CD4-positive, alpha-beta memory T cell (primary cell): ENCODE measurements at regions of chr2 and their contacts with region 1.

Region 1: DNA sequence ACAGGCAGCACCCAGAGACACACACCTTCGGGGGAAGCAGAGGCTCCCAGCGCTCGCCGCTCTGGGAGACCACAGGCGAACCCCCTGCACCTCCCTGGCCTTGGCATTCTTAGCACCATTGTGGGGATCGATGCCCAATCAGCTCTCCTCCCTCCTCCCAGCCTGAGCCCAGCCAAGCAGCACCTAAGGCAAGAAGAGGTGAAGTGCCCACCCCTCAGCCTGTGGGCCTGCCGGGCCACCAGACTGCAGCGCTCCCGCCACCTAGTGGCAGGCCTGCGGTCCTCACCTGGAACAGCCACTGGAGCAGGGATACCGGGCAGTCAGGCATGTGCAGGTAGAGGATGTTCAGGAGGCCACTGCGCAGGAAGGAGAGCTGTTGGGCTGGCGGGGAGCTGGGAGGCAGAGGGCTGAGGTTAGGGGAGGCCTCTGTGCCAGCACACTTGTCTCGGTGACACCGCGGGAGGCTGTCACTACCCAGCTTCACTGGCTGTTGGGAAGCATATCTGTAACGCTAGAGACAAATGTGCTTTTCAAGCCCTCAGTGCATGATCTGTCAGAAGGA is 35.2 kb downstream of the FAM178B start:
- DNase-seq: peak; percentile 68 to 79 (median 78)
- H3K4me3 ChIP-seq: no peak overlapping the region
- H3K4me3 Mint-ChIP-seq: peak overlapping the region in 3 of 8 donors; percentile 1 to 37 (median 24)
- H3K27ac ChIP-seq: no peak overlapping the region
- H3K27ac Mint-ChIP-seq: peak overlapping the region in 1 of 7 donors; percentile 61
- H3K4me1 ChIP-seq: peaks cover 28% of the 10 kb centered on the region
- H3K4me1 Mint-ChIP-seq: peaks cover 16 to 34% (median 26%) of the 10 kb centered on the region in 4 donors
- H3K27me3 ChIP-seq: no peaks in the 10 kb centered on the region
- H3K27me3 Mint-ChIP-seq: no peaks in the 10 kb centered on the region

Region 2: GRCh38 chr2:96180521-96180920 is 770.7 kb before region 1 on chr2:
- CTCF ChIA-PET with region 1: no interaction called
- POLR2A ChIA-PET with region 1: no interaction called
- intact Hi-C with region 1: no loop called
- DNase-seq: no peak
- H3K4me3 ChIP-seq: no peak overlapping the region
- H3K4me3 Mint-ChIP-seq: no peak overlapping the region
- H3K27ac ChIP-seq: no peak overlapping the region
- H3K27ac Mint-ChIP-seq: no peak overlapping the region
- H3K4me1 ChIP-seq: no peaks in the 10 kb centered on the region
- H3K4me1 Mint-ChIP-seq: peaks cover 0 to 5% (median 3%) of the 10 kb centered on the region in 4 donors
- H3K27me3 ChIP-seq: no peaks in the 10 kb centered on the region
- H3K27me3 Mint-ChIP-seq: no peaks in the 10 kb centered on the region

Region 3: DNA sequence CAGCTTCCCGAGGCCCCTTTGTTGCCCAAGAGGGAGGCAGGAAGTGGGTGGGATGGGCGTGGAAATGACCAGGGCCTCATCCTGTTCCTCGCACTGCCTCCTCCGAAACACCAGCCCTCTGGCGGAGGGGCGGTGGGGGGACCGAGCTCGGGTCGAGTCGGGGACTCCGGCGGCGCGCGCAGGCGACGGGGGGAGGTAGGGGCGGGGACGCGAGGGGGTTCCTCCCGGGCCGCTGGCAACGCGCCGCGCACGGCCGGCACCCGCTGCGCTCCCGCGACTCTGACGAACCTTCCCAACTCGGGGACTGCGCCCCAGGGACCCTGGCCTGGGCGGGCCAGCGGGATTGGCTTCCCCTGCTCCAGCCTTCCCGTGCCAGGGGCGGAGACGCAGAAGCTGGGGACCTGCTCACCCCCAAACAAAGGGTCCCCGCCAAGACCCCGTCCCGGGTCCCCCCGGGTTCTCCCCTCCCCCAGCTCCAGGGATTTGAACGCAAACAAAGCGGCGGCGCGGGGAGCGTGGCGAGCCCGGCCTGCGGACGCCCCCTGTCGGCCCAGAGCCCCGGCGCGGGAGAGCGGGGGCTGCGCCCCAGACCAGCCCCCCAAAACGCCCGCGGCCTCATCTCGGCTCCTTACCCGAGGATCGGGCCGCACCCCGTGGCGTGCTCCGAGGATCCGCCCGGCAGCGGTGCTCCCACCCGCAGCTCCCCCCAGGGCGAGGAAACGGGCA is 82.5 kb before region 1 on chr2:
- CTCF ChIA-PET with region 1: interaction called, 624 read pairs
- POLR2A ChIA-PET with region 1: interaction called, 194 read pairs
- intact Hi-C with region 1: loop called (anchors 1 kb)
- DNase-seq: peak; percentile 50 to 72 (median 52)
- H3K4me3 ChIP-seq: peak overlapping the region; percentile 47 to 72
- H3K4me3 Mint-ChIP-seq: peak overlapping the region; percentile 69 to 91 (median 88)
- H3K27ac ChIP-seq: peak overlapping the region; percentile 68
- H3K27ac Mint-ChIP-seq: peak overlapping the region in 6 of 7 donors; percentile 79 to 94 (median 92)
- H3K4me1 ChIP-seq: peaks cover 39% of the 10 kb centered on the region
- H3K4me1 Mint-ChIP-seq: peaks cover 27 to 58% (median 42%) of the 10 kb centered on the region in 4 donors
- H3K27me3 ChIP-seq: no peaks in the 10 kb centered on the region
- H3K27me3 Mint-ChIP-seq: no peaks in the 10 kb centered on the region

Region 4: GRCh38 chr2:96888072-96889011 is 62.8 kb before region 1 on chr2:
- CTCF ChIA-PET with region 1: interaction called, 15 read pairs
- POLR2A ChIA-PET with region 1: interaction called, 3 read pairs
- intact Hi-C with region 1: no loop called
- DNase-seq: no peak
- H3K4me3 ChIP-seq: no peak overlapping the region
- H3K4me3 Mint-ChIP-seq: no peak overlapping the region
- H3K27ac ChIP-seq: no peak overlapping the region
- H3K27ac Mint-ChIP-seq: peak overlapping the region in 4 of 7 donors; percentile 50 to 86 (median 78)
- H3K4me1 ChIP-seq: peaks cover 30% of the 10 kb centered on the region
- H3K4me1 Mint-ChIP-seq: peaks cover 30 to 46% (median 36%) of the 10 kb centered on the region in 4 donors
- H3K27me3 ChIP-seq: no peaks in the 10 kb centered on the region
- H3K27me3 Mint-ChIP-seq: no peaks in the 10 kb centered on the region

Region 5: GRCh38 chr2:96927405-96928243 is 23.6 kb before region 1 on chr2:
- CTCF ChIA-PET with region 1: interaction called, 18 read pairs
- POLR2A ChIA-PET with region 1: no interaction called
- intact Hi-C with region 1: no loop called
- DNase-seq: no peak
- H3K4me3 ChIP-seq: no peak overlapping the region
- H3K4me3 Mint-ChIP-seq: no peak overlapping the region
- H3K27ac ChIP-seq: no peak overlapping the region
- H3K27ac Mint-ChIP-seq: no peak overlapping the region
- H3K4me1 ChIP-seq: peaks cover 27% of the 10 kb centered on the region
- H3K4me1 Mint-ChIP-seq: peaks cover 17 to 40% (median 24%) of the 10 kb centered on the region in 4 donors
- H3K27me3 ChIP-seq: no peaks in the 10 kb centered on the region
- H3K27me3 Mint-ChIP-seq: peaks cover 0 to 1% of the 10 kb centered on the region in 2 donors

Region 6: DNA sequence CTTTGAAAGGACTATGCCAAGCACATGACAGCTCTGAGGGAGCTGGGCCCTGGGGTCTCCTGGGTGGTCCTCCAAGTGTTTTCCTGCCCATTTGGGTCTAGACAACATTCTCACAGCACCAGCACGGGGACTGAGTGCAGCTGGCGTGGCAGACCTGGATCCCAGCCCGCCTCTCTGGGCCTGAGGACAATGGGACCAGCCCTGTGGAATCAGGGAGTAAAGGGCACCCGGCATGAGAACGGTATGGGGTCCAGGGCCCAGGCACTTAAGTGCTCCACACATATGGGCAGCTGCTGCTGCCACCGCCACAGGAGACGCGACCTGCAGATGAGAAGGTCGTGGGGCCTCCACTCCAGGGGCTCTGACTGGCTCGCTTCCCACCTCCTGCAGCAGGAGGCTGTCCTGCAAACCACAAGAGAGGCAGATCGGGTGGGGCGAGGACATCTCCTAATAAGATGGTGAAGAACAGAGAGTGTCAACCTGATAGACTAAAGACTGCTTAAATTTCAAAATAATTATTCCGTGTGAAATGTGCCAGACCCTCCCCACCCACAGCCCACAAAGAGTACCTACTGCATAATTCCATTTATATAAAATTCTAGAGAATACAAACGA is 11.1 kb before region 1 on chr2:
- CTCF ChIA-PET with region 1: interaction called, 68 read pairs
- POLR2A ChIA-PET with region 1: interaction called, 9 read pairs
- intact Hi-C with region 1: no loop called
- DNase-seq: no peak
- H3K4me3 ChIP-seq: no peak overlapping the region
- H3K4me3 Mint-ChIP-seq: peak overlapping the region in 5 of 8 donors; percentile 17 to 82 (median 67)
- H3K27ac ChIP-seq: no peak overlapping the region
- H3K27ac Mint-ChIP-seq: peak overlapping the region in 1 of 7 donors; percentile 37
- H3K4me1 ChIP-seq: peaks cover 26% of the 10 kb centered on the region
- H3K4me1 Mint-ChIP-seq: peaks cover 24 to 42% (median 27%) of the 10 kb centered on the region in 4 donors
- H3K27me3 ChIP-seq: no peaks in the 10 kb centered on the region
- H3K27me3 Mint-ChIP-seq: peaks cover 0 to 1% of the 10 kb centered on the region in 2 donors